Activated T-helper 1 cell treated with anti-CD3 and anti-CD28 coated beads, Interleukin-12 subunit alpha, Interleukin-12 subunit beta, Interleukin-2, Interleukin-4 antibody, amounts not matched to agents 30 ng/mL and 10 ng/mL and 1 ng/mL, durations not matched to agents 14 hours and 24 hours and 36 hours (primary cell): ENCODE measurements at regions of chr2 and their contacts with region 1.

Region 1: DNA sequence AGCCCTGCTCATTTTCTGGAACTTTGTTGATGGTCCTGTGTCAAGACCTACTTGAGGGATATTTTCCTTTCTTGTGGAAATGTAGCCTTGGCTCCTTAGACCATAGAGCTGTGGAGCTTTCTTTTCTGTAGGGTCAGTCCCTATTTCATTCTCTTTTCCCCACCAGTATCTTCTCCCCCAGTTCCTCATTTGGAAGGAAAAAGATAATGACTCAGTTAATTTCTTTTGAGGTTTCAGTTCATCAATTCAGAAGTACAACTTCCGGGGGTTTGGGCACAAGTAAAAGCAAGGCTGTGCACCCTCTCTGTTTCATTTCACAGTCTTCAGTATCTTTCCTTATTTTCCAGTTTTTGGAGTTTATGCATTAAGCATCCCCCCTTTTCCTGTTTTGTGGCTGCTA is 70.7 kb downstream of the CDC42EP3 start:
- DNase-seq: no peak
- H3K4me3 Mint-ChIP-seq: peak overlapping the region; percentile 34
- H3K27ac Mint-ChIP-seq: no peak overlapping the region
- H3K4me1 Mint-ChIP-seq: peaks cover 45% of the 10 kb centered on the region
- H3K27me3 Mint-ChIP-seq: peaks cover 14% of the 10 kb centered on the region

Region 2: DNA sequence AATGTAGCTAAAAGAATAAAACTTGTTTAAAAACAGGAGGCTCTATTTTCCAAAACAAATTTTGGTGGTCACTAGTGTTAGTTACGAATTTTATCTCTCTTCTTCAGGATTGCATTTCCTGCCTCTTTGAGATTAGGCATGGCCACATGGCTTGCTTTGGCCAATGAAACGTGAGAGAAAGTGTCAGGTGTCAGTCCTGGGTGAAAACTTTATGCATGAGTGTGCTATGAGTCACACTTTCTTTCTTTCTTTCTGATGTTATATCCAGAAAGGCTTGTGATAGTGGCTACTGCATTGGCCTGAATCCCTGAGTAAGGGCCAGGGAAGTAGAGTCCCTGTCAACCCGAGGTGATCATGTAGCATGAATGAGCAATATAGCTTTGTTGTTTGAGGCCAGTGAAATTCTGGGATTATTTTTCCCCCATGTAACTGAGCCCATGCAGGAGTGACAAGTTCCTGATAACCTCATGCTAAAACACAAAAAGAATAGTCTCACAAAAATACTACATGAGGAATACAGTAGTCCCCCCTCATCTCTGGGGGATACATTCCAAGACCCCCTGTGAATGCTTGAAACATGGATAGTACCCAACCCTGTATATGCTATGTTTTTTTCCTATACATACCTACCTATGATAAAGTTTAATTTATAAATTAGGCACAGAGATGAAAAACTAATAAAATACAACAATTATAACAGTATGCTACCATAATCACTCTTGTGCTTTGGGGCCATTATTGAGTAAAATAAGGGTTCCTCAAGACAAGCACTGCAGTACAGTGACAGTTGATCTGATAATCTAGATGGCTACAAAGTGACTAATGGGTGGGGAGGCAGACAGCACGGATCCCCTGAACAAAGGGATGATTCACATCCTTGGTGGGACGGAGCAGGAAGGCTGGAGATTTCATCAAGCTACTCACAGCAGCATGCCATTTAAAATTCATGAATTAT is 38.8 kb before region 1 on chr2:
- intact Hi-C with region 1: no loop called
- DNase-seq: no peak
- H3K4me3 Mint-ChIP-seq: no peak overlapping the region
- H3K27ac Mint-ChIP-seq: no peak overlapping the region
- H3K4me1 Mint-ChIP-seq: peaks cover 7% of the 10 kb centered on the region
- H3K27me3 Mint-ChIP-seq: no peaks in the 10 kb centered on the region

Region 3: GRCh38 chr2:37615804-37616676 is 15.3 kb after region 1 on chr2:
- intact Hi-C with region 1: loop called (anchors 2 kb)
- DNase-seq: peak; percentile 34
- H3K4me3 Mint-ChIP-seq: no peak overlapping the region
- H3K27ac Mint-ChIP-seq: peak overlapping the region; percentile 1
- H3K4me1 Mint-ChIP-seq: peaks cover 30% of the 10 kb centered on the region
- H3K27me3 Mint-ChIP-seq: peaks cover 2% of the 10 kb centered on the region